ENCODE measurements at regions of chr2 and their contacts with region 1.

Region 1: DNA sequence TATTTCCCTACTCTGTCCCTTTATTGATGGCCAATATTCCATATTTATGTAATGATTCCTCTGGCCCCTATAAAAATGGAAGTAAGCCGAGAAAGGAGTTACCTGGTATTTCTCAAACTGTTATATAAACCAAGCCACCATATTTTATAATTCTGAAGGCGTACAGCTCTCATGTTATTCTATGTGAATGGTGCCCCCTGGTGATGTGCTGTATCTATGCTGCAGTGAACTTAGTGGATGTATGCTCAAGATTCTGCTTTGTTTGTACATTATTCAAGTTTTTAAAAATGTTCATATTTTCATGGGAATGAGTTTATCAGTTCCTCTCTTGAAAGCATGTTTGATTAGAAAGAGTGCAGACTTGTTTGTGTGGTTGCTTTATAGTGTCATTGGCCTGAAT is 194.5 kb upstream of the LRRTM1 start:
- DNase-seq: no peak
- H3K4me3 ChIP-seq: no peak overlapping the region
- CTCF ChIP-seq: peak; percentile 63

Region 2: GRCh38 chr2:80255918-80256781 is 242.9 kb before region 1 on chr2:
- CTCF ChIA-PET with region 1: interaction called, 23 read pairs
- POLR2A ChIA-PET with region 1: no interaction called
- DNase-seq: no peak
- H3K4me3 ChIP-seq: no peak overlapping the region
- CTCF ChIP-seq: peak; percentile 21

Region 3: GRCh38 chr2:80288576-80288975 is 210.5 kb before region 1 on chr2:
- CTCF ChIA-PET with region 1: interaction called, 12 read pairs
- POLR2A ChIA-PET with region 1: no interaction called
- DNase-seq: no peak
- H3K4me3 ChIP-seq: no peak overlapping the region
- CTCF ChIP-seq: no peak

Region 4: GRCh38 chr2:80326214-80326613 is 172.9 kb before region 1 on chr2:
- CTCF ChIA-PET with region 1: interaction called, 240 read pairs
- POLR2A ChIA-PET with region 1: no interaction called
- DNase-seq: no peak
- H3K4me3 ChIP-seq: no peak overlapping the region
- CTCF ChIP-seq: peak; percentile 24

Region 5: GRCh38 chr2:80437959-80438358 is 61.1 kb before region 1 on chr2:
- CTCF ChIA-PET with region 1: no interaction called
- POLR2A ChIA-PET with region 1: no interaction called
- DNase-seq: no peak
- H3K4me3 ChIP-seq: no peak overlapping the region
- CTCF ChIP-seq: no peak

Region 6: DNA sequence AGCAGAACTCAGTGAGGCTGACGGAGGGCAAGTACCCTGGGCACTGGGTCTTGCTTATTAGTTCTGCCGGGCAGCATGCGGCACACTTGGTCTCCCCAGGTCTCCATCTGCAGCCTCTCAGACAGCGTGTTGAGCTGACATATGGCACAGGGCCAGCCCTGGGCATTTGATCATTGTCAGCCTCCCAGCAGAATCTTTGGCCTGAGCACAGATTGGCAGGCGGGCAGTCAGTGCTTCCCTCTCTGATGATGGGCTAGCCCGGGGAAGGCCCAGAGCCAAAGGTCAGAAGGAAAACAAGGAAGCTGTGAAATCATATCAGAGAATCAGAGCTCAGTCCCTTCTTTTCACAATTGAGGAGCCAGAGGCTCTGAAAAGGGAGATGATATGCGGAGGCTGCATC is 44.5 kb before region 1 on chr2:
- CTCF ChIA-PET with region 1: no interaction called
- POLR2A ChIA-PET with region 1: no interaction called
- DNase-seq: no peak
- H3K4me3 ChIP-seq: no peak overlapping the region
- CTCF ChIP-seq: no peak

Measured in AG04449 (cell line).